Endothelial cell of umbilical vein (primary cell): ENCODE measurements at regions of chr11 and their contacts with region 1.

Region 1: DNA sequence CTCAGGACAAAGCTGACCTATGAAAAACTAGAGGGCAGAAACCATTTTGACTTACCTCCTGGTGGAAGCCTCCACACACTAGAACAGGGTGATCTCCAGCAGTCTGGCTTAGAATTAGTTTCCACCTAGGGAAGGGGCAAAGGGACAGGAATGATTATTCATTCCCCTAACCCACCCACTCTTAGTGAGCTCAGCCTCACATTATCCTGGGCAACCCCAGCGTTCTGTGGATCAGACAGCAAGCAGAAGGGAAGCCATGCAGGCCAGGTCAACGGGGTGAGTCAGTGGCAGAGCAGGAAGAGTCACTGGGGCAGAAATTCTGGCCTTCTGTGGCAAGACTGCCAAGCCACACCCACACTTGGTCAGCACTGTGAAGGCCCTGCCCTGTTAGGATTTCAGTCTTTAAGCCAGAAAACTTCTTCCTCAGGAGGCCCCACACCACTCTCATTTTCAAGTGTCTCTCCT is 10.5 kb downstream of the NUMA1 start:
- DNase-seq: peak; percentile 81
- H3K4me3 ChIP-seq: peak overlapping the region in 1 of 3 experiments; percentile 1
- H3K27ac ChIP-seq: peak overlapping the region; percentile 50
- H3K4me1 ChIP-seq: peaks cover 64% of the 10 kb centered on the region
- H3K27me3 ChIP-seq: no peaks in the 10 kb centered on the region
- CTCF ChIP-seq: no peak
- POLR2A ChIP-seq: peak; percentile 64

Region 2: DNA sequence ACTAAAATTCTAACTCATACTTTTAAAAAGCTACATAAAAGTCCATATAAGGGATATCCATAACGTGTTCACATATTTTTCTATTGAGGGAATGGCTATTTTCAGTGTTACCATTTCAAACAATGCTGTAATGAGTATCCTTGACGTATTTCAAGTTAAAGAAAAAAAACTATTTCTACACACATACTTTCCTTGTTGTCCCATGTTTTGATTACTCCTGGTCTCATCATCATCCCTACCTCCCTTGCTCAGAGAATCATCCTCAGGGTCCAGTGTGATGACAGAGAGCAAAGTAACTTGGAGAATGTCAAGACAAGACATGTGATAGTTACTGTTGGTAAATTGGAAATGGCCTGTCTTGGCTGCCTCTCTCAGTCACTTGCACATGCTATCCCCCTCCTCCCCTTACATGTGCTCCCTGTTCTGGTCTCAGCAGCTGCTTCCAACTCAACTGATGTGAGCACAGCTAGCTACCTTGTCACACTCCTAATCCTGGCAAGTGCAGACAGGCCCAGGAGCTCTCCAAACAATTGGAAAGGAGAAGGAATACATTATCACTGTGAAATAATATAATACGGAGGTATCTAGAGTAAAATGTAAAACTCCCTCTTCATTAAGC is 11.3 kb before region 1 on chr11:
- CTCF ChIA-PET with region 1: interaction called, 11 read pairs
- POLR2A ChIA-PET with region 1: interaction called, 4 read pairs
- dilution Hi-C with region 1: no loop called
- intact Hi-C with region 1: no loop called
- DNase-seq: no peak
- H3K4me3 ChIP-seq: no peak overlapping the region
- H3K27ac ChIP-seq: no peak overlapping the region
- H3K4me1 ChIP-seq: no peaks in the 10 kb centered on the region
- H3K27me3 ChIP-seq: no peaks in the 10 kb centered on the region
- CTCF ChIP-seq: no peak
- POLR2A ChIP-seq: no peak